ENCODE measurements at regions of chr14 and their contacts with region 1.

Region 1: DNA sequence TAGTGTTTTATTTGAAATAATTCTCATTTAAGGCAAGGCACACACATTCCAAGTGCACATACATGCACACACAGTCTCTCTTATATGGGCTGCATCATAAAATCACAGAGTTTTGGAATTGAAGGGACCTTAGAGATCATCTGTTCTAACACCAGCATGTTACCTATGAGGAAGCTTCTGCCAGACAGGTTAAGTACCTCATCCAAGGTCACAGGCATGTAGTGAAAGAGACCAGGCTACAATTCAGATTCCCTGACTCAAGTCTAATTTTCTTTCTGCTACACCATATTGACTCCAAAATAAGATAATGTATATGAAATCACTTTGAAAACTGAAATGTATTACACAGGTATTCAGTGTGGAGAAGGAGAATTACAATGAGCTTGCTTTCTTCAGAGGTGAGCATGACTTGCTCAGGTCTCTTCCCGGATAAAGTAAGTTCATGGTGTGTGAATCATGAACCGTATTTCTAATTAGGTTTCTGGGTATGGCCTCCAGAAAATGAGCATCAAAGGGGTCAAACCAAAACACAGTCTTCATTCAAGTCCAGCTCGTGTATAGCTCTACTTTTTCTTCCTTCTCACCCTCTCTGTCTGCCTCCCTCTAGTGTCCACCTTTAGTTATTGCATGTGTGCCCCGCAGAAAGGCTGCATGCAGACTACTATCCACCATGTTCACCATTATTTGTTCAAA is 411.9 kb downstream of the FUT8 start:
- DNase-seq: no peak
- H3K4me3 ChIP-seq: no peak overlapping the region
- H3K27ac ChIP-seq: no peak overlapping the region
- H3K4me1 ChIP-seq: no peaks in the 10 kb centered on the region
- H3K27me3 ChIP-seq: no peaks in the 10 kb centered on the region
- CTCF ChIP-seq: peak; percentile 66 to 89 (median 77)

Region 2: DNA sequence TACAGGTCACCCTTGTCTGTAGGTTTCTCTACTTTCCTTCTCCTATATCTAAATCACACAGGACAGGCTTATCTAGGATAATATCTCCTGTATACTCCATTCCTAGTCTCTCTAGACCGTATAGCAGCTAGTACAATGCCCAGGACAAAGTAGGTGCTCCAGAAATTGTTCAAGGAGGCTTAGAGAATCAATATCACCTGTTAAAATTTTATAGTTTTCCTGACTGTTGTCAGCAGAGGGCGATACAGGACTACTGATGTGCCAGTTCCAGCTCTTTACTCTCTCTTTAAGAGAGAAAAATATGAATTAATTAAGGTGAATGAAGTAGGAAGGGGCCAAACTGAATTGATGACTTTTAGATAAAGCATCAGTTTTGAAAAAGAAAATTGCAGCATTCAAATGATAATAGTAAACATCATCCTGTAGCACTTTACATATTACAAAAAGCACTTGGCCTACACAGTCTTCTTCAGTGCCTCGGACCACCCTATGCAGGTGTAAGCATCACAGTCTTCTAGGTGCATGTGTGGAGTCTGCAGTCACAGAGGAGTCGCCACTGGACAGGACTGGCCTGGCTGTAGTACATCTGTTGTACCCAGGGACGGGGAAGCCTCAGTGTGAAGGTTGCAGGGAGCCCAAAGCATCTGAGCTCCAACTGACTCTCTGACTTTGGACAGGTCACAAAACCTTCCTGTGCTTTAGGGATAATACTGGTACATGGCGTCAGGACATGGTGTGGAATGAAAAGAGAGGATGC is 660.2 kb before region 1 on chr14:
- intact Hi-C with region 1: loop called (anchors 1 kb)
- DNase-seq: peak in 1 of 2 donors; percentile 16
- H3K4me3 ChIP-seq: no peak overlapping the region
- H3K27ac ChIP-seq: no peak overlapping the region
- H3K4me1 ChIP-seq: no peaks in the 10 kb centered on the region
- H3K27me3 ChIP-seq: no peaks in the 10 kb centered on the region
- CTCF ChIP-seq: peak; percentile 41 to 62 (median 42)